CD8-positive, alpha-beta T cell (primary cell): ENCODE measurements at regions of chr20 and their contacts with region 1.

Region 1: DNA sequence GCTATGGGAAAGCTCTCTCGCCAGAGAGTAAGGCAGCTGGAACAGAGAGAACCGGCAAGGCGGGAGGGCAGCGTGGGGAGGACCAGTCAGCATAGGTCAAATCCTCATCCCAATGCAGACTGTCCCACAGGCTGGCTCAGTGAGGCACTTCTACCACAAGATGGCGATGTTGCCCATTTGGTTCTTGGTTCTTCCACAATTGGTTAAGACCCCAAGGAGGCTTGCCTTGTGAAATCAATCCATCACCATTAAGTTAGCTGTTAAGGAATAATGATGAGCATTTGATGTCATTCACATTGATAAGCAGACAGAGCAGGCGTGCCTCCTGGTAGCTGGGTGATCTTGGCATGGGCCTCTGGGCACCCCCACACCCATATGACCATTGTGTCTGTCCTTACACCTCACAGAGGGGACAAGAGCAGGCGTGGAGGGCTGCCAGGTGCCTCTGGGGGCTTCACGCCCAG is 2.4 kb downstream of the CSTL1 start:
- DNase-seq: peak; percentile 36 to 81 (median 66)
- ATAC-seq: peak; percentile 83
- H3K4me3 ChIP-seq: no peak overlapping the region
- H3K4me3 Mint-ChIP-seq: no peak overlapping the region
- H3K27ac ChIP-seq: no peak overlapping the region
- H3K27ac Mint-ChIP-seq: no peak overlapping the region
- H3K4me1 ChIP-seq: no peaks in the 10 kb centered on the region
- H3K4me1 Mint-ChIP-seq: no peaks in the 10 kb centered on the region
- H3K27me3 ChIP-seq: no peaks in the 10 kb centered on the region
- H3K27me3 Mint-ChIP-seq: no peaks in the 10 kb centered on the region
- CTCF ChIP-seq: peak; percentile 80

Region 2: GRCh38 chr20:23420943-23421931 is 20.6 kb before region 1 on chr20 and contains the start of gene NAPB:
- CTCF ChIA-PET with region 1: interaction called, 50 read pairs
- POLR2A ChIA-PET with region 1: no interaction called
- intact Hi-C with region 1: no loop called
- DNase-seq: peak; percentile 85 to 95 (median 93)
- ATAC-seq: peak; percentile 98
- H3K4me3 ChIP-seq: peak within 1 kb of the TSS; percentile 85 to 96
- H3K4me3 Mint-ChIP-seq: peak within 1 kb of the TSS; percentile 87
- H3K27ac ChIP-seq: peak within 1 kb of the TSS; percentile 71 to 76
- H3K27ac Mint-ChIP-seq: peak within 1 kb of the TSS; percentile 89
- H3K4me1 ChIP-seq: peaks cover 23% of the 10 kb centered on the region
- H3K4me1 Mint-ChIP-seq: peaks cover 67% of the 10 kb centered on the region
- H3K27me3 ChIP-seq: peaks cover 0 to 4% of the 10 kb centered on the region in 2 experiments
- H3K27me3 Mint-ChIP-seq: no peaks in the 10 kb centered on the region
- CTCF ChIP-seq: peak; percentile 21
- total RNA-seq, gene NAPB: 10.9 to 11.7 TPM

Region 3: DNA sequence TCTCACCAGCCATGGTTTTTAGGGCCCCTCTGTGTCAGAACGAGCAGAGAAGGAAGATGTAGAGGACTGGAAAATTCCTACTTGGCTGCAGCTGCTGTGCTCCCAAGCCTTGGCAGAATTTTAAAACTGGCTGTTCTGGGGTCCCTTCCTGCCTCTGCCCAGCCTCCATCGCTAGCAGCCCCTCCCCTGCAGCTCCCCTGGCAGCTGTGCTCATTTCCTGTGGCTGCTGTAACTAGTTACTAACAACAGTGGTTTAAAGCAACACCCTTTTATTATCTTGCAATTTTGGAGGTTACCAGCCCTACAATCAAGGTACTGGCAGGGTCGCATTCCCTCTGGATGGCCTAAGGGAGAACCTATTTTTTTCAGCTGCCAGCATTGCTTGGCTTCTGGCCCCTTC is 14.5 kb after region 1 on chr20:
- CTCF ChIA-PET with region 1: interaction called, 30 read pairs
- POLR2A ChIA-PET with region 1: no interaction called
- intact Hi-C with region 1: no loop called
- DNase-seq: peak in 5 of 9 experiments; percentile 30 to 74 (median 54)
- ATAC-seq: peak; percentile 84
- H3K4me3 ChIP-seq: peak overlapping the region in 1 of 2 experiments; percentile 1
- H3K4me3 Mint-ChIP-seq: peak overlapping the region; percentile 50
- H3K27ac ChIP-seq: peak overlapping the region; percentile 53 to 91
- H3K27ac Mint-ChIP-seq: peak overlapping the region; percentile 83
- H3K4me1 ChIP-seq: peaks cover 20% of the 10 kb centered on the region
- H3K4me1 Mint-ChIP-seq: peaks cover 28% of the 10 kb centered on the region
- H3K27me3 ChIP-seq: peaks cover 0 to 4% of the 10 kb centered on the region in 2 experiments
- H3K27me3 Mint-ChIP-seq: no peaks in the 10 kb centered on the region
- CTCF ChIP-seq: no peak

Region 4: DNA sequence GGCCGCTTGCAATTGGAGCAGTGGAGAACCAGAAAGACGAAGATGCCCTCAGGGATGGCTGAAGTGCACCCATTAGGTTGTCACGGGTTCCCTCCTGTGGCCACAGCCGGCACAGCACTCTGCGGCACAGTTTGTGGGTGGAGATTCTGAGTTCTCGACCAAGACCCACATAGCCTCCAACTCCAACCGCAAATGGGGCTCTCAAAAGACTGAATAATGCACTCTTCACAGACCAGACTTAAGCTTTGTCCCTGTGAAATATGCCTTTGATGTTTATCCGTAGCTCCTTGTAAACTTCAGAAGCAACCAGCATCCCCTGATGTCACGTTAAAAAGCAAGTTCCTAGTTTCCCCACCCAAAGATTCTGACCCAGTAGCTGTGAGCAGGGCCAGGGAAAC is 164.8 kb after region 1 on chr20:
- CTCF ChIA-PET with region 1: interaction called, 185 read pairs
- POLR2A ChIA-PET with region 1: no interaction called
- intact Hi-C with region 1: loop called in 1 of 2 experiments (anchors 1 kb)
- DNase-seq: peak; percentile 32 to 77 (median 65)
- ATAC-seq: peak; percentile 92
- H3K4me3 ChIP-seq: no peak overlapping the region
- H3K4me3 Mint-ChIP-seq: no peak overlapping the region
- H3K27ac ChIP-seq: no peak overlapping the region
- H3K27ac Mint-ChIP-seq: no peak overlapping the region
- H3K4me1 ChIP-seq: no peaks in the 10 kb centered on the region
- H3K4me1 Mint-ChIP-seq: peaks cover 5% of the 10 kb centered on the region
- H3K27me3 ChIP-seq: no peaks in the 10 kb centered on the region
- H3K27me3 Mint-ChIP-seq: no peaks in the 10 kb centered on the region
- CTCF ChIP-seq: peak; percentile 70

Region 5: DNA sequence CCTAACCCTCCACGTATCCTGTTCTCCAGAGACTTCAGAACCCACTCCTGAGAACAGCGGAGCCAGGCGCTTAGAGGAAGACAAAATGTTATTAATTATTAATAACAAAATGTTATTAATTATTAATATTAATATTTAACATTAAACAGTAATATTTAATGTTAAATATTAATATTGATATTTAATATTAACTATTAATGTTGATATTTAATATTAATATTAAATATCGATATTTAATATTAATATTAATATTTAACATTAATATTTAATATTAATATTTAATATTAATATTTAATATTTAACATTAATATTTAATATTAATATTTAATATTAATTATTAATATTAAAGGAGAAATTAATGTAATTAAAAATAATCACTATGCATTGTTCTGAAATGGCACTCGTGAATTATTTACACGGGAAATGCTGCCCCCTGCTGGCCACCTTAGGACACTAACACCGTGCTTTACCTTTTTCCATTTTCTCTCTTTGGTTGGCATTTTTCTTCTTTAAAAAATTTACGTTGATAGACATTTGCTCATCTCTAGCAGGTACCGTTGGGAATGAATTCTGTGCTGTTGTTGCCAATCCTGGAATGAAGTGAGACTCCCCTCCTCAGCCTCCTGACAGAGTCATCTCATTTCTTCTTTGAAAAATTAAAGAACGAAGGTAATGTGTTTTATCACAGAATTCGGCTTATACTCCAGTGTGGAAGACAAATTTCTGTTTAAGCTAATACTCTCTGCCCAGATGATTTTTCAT is 554.2 kb after region 1 on chr20:
- CTCF ChIA-PET with region 1: interaction called, 4 read pairs
- POLR2A ChIA-PET with region 1: no interaction called
- intact Hi-C with region 1: loop called in 1 of 2 experiments (anchors 10 kb)
- DNase-seq: peak; percentile 13 to 81 (median 68)
- ATAC-seq: peak; percentile 38
- H3K4me3 ChIP-seq: no peak overlapping the region
- H3K4me3 Mint-ChIP-seq: no peak overlapping the region
- H3K27ac ChIP-seq: no peak overlapping the region
- H3K27ac Mint-ChIP-seq: no peak overlapping the region
- H3K4me1 ChIP-seq: no peaks in the 10 kb centered on the region
- H3K4me1 Mint-ChIP-seq: peaks cover 2% of the 10 kb centered on the region
- H3K27me3 ChIP-seq: no peaks in the 10 kb centered on the region
- H3K27me3 Mint-ChIP-seq: peaks cover 2% of the 10 kb centered on the region
- CTCF ChIP-seq: peak; percentile 95